ENCODE measurements at regions of chrX and their contacts with region 1.

Region 1: GRCh38 chrX:54639346-54640102 is 109.5 kb downstream of the GNL3L start:
- DNase-seq: peak; percentile 82 to 96 (median 90)
- ATAC-seq: peak; percentile 88
- H3K4me3 ChIP-seq: peak overlapping the region; percentile 60
- H3K4me3 Mint-ChIP-seq: peak overlapping the region; percentile 94
- H3K27ac ChIP-seq: peak overlapping the region; percentile 93 to 95
- H3K27ac Mint-ChIP-seq: peak overlapping the region; percentile 98
- H3K4me1 ChIP-seq: peaks cover 14% of the 10 kb centered on the region
- H3K4me1 Mint-ChIP-seq: peaks cover 14% of the 10 kb centered on the region
- H3K27me3 ChIP-seq: no peaks in the 10 kb centered on the region
- H3K27me3 Mint-ChIP-seq: no peaks in the 10 kb centered on the region
- CTCF ChIP-seq: peak; percentile 47

Region 2: GRCh38 chrX:54182864-54183608 is 456.5 kb before region 1 on chrX and contains the start of gene FAM120C:
- CTCF ChIA-PET with region 1: no interaction called
- POLR2A ChIA-PET with region 1: interaction called, 11 read pairs
- intact Hi-C with region 1: loop called in 1 of 2 experiments (anchors 5 kb)
- DNase-seq: peak; percentile 41 to 82 (median 56)
- ATAC-seq: peak; percentile 69
- H3K4me3 ChIP-seq: peak within 1 kb of the TSS; percentile 67
- H3K4me3 Mint-ChIP-seq: peak within 1 kb of the TSS; percentile 92
- H3K27ac ChIP-seq: peak within 1 kb of the TSS; percentile 69 to 75
- H3K27ac Mint-ChIP-seq: peak within 1 kb of the TSS; percentile 86
- H3K4me1 ChIP-seq: peaks cover 29% of the 10 kb centered on the region
- H3K4me1 Mint-ChIP-seq: peaks cover 42% of the 10 kb centered on the region
- H3K27me3 ChIP-seq: no peaks in the 10 kb centered on the region
- H3K27me3 Mint-ChIP-seq: no peaks in the 10 kb centered on the region
- CTCF ChIP-seq: no peak
- total RNA-seq, gene FAM120C: 12.3 to 13.3 TPM

Region 3: DNA sequence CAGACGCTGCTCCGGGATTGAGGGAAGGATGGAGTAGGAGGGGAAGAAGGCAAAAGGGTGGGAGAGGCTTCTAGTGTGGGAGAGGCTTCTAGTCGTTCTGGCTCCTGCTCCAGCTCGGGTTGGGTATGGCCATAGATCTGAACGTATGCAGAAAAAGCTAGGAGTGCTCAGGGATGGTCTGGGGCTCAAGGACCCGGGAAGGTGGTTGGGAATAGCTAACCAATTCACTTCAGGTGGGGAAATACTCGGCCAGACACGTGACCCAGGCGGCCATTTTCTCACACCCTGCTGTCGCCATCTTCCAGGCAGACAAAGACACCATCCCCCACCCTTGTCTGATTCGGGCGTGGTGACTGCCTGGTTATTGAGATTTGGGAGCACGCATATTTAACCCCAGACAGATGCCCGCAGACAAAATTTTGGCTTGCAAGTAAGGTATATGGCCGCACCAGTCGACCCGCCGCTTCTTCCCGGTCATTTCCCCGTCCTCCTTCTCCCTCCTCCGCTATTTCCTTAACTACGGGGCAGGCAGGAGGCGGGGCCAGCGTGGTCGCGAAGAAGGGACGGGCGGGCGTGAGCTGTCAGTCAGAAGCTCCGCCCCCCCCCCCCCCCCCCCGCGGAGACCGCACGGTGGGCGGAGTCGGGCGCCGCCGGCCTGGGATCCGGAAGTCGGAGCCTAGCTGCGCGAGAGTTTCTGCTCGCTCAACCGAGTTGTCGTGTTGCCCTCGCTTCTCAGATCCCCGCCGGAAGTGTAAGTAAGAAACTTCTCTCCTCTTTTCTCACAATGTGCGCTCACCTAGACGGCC is 109.8 kb before region 1 on chrX and contains the start of gene GNL3L:
- CTCF ChIA-PET with region 1: no interaction called
- POLR2A ChIA-PET with region 1: interaction called, 47 read pairs
- intact Hi-C with region 1: loop called in 1 of 2 experiments (anchors 5 kb)
- DNase-seq: peak; percentile 56 to 90 (median 79)
- ATAC-seq: peak; percentile 84
- H3K4me3 ChIP-seq: peak within 1 kb of the TSS; percentile 76
- H3K4me3 Mint-ChIP-seq: peak within 1 kb of the TSS; percentile 99
- H3K27ac ChIP-seq: peak within 1 kb of the TSS; percentile 64 to 90
- H3K27ac Mint-ChIP-seq: peak within 1 kb of the TSS; percentile 94
- H3K4me1 ChIP-seq: peaks cover 38% of the 10 kb centered on the region
- H3K4me1 Mint-ChIP-seq: peaks cover 44% of the 10 kb centered on the region
- H3K27me3 ChIP-seq: no peaks in the 10 kb centered on the region
- H3K27me3 Mint-ChIP-seq: no peaks in the 10 kb centered on the region
- CTCF ChIP-seq: no peak
- total RNA-seq, gene GNL3L: 21.5 to 22.8 TPM

Region 4: DNA sequence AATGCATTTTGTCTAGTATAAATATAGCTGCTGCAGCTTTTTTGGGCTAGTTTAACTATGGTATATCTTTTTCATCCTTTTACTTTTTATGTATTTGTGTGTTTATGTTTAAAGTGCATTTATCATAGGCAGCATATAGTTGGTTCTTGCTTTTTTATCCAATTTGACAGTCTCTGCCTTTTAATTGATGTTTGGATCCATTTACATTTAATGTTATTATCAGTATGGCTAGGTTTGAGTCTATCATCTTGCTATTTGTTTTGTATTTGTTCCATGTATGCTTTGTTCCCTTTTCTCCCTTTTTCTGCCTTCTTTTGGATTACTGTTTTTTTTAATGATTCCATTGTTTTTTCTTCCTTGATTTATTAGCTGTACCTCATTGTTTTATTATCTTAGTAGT is 69.2 kb before region 1 on chrX:
- CTCF ChIA-PET with region 1: no interaction called
- POLR2A ChIA-PET with region 1: no interaction called
- intact Hi-C with region 1: no loop called
- DNase-seq: no peak
- ATAC-seq: no peak
- H3K4me3 ChIP-seq: no peak overlapping the region
- H3K4me3 Mint-ChIP-seq: no peak overlapping the region
- H3K27ac ChIP-seq: no peak overlapping the region
- H3K27ac Mint-ChIP-seq: no peak overlapping the region
- H3K4me1 ChIP-seq: no peaks in the 10 kb centered on the region
- H3K4me1 Mint-ChIP-seq: no peaks in the 10 kb centered on the region
- H3K27me3 ChIP-seq: no peaks in the 10 kb centered on the region
- H3K27me3 Mint-ChIP-seq: no peaks in the 10 kb centered on the region
- CTCF ChIP-seq: no peak

Region 5: DNA sequence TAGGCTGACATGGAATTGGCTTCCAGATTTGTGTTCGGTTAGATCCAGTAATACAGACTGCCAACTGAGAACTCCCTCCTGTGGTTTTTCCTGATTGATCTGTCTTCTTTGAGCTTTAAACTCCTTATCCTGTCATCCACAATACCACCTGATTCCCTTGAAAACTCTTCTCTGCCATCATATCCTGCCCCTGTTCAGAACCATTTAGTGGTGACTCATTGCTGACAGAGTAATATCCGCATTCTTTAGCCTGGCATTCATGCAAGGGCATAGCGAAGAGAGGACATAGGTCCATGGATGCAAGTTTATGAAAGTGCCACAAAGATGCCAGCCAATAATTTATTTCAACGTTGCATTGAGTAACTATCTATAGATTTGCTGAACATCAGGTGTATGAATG is 81.9 kb after region 1 on chrX:
- CTCF ChIA-PET with region 1: no interaction called
- POLR2A ChIA-PET with region 1: no interaction called
- intact Hi-C with region 1: no loop called
- DNase-seq: no peak
- ATAC-seq: no peak
- H3K4me3 ChIP-seq: no peak overlapping the region
- H3K4me3 Mint-ChIP-seq: no peak overlapping the region
- H3K27ac ChIP-seq: no peak overlapping the region
- H3K27ac Mint-ChIP-seq: no peak overlapping the region
- H3K4me1 ChIP-seq: no peaks in the 10 kb centered on the region
- H3K4me1 Mint-ChIP-seq: no peaks in the 10 kb centered on the region
- H3K27me3 ChIP-seq: no peaks in the 10 kb centered on the region
- H3K27me3 Mint-ChIP-seq: peaks cover 7% of the 10 kb centered on the region
- CTCF ChIP-seq: no peak

Region 6: DNA sequence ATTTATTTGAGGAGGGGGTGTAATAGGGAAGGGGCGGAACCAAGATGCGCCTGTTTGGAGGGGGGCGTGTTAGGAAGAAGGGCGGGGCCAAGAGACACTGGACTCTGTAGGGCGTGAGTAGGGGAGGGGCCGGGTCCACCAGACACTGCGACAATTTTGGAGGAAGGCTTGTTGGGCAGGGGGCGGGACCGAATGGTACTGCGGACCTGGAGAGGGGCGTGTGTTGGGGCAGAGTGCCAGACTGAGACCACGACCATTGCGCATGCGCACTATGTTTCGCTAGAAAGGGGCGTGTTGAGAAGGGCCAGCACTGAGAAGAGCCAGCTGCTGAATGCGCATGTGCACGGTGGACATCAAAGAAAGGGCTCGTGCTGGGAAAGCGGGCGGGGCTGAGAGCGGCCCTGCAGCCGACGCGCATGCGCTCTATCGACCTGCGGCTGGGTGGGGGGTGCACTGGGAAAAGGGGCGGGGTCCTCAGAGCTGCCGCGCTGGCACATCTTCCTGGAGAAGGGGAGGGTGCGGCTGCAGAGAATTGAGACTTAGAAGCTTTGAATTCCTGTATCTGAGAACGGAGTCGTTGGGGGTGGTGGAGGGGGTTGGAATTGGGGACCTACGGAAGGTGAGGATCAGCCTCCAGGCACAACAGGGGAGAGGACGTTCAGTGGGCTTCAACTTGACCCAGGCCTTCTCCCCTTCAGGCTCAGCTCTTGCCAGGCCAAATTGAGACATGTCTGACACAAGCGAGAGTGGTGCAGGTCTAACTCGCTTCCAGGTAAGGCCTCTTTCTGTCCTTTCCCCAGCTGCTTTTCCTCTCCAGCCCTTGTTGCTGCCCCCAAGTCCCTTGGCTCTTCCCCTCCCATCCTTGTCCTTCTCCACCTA is 169.3 kb after region 1 on chrX:
- CTCF ChIA-PET with region 1: interaction called, 3 read pairs
- POLR2A ChIA-PET with region 1: interaction called, 18 read pairs
- intact Hi-C with region 1: loop called (anchors 1 to 5 kb)
- DNase-seq: peak; percentile 75 to 97 (median 84)
- ATAC-seq: peak; percentile 70
- H3K4me3 ChIP-seq: peak overlapping the region; percentile 93
- H3K4me3 Mint-ChIP-seq: peak overlapping the region; percentile 95
- H3K27ac ChIP-seq: peak overlapping the region; percentile 65 to 88
- H3K27ac Mint-ChIP-seq: peak overlapping the region; percentile 98
- H3K4me1 ChIP-seq: peaks cover 25% of the 10 kb centered on the region
- H3K4me1 Mint-ChIP-seq: peaks cover 24% of the 10 kb centered on the region
- H3K27me3 ChIP-seq: no peaks in the 10 kb centered on the region
- H3K27me3 Mint-ChIP-seq: no peaks in the 10 kb centered on the region
- CTCF ChIP-seq: no peak